OCI-LY7 (cell line): ENCODE measurements at regions of chr12 and their contacts with region 1.

Region 1: GRCh38 chr12:95003213-95003920 is at the start of gene NDUFA12:
- DNase-seq: peak; percentile 97
- H3K4me3 ChIP-seq: peak within 1 kb of the TSS; percentile 80
- H3K27ac ChIP-seq: peak within 1 kb of the TSS; percentile 56
- H3K4me1 ChIP-seq: peaks cover 32% of the 10 kb centered on the region
- CTCF ChIP-seq: no peak
- total RNA-seq, gene NDUFA12: 109 and 127 TPM in 2 replicates

Region 2: GRCh38 chr12:94839347-94839746 is 164.0 kb before region 1 on chr12:
- CTCF ChIA-PET with region 1: no interaction called
- POLR2A ChIA-PET with region 1: no interaction called
- intact Hi-C with region 1: no loop called
- DNase-seq: peak; percentile 66
- H3K4me3 ChIP-seq: no peak overlapping the region
- H3K27ac ChIP-seq: peak overlapping the region; percentile 50
- H3K4me1 ChIP-seq: peaks cover 19% of the 10 kb centered on the region
- CTCF ChIP-seq: no peak

Region 3: DNA sequence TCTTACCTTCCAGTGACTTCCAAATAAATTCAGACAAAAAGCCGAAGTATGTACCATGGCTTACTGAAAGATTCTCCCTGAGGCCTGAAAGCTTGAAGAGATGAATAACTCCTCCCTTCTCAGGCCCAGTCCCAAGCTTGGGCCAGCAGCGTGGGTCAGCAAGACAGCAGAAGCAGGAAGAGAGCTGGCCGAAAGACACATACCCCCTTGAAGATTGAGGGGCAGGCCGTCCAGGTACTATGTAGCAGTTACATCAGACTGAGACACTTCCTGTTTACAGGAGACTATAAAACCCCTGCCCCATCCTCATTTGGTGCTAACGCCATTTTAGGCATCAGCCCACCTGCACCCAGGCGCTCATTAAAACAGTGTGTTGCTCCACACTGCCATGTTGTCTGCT is 14.9 kb before region 1 on chr12:
- CTCF ChIA-PET with region 1: no interaction called
- POLR2A ChIA-PET with region 1: interaction called, 27 read pairs
- intact Hi-C with region 1: no loop called
- DNase-seq: peak; percentile 16
- H3K4me3 ChIP-seq: no peak overlapping the region
- H3K27ac ChIP-seq: peak overlapping the region; percentile 20
- H3K4me1 ChIP-seq: peaks cover 26% of the 10 kb centered on the region
- CTCF ChIP-seq: no peak

Region 4: GRCh38 chr12:95072900-95073697 is 69.7 kb after region 1 on chr12 and contains the start of gene NR2C1:
- CTCF ChIA-PET with region 1: no interaction called
- POLR2A ChIA-PET with region 1: interaction called, 12 read pairs
- intact Hi-C with region 1: no loop called
- DNase-seq: peak; percentile 97
- H3K4me3 ChIP-seq: peak within 1 kb of the TSS; percentile 93
- H3K27ac ChIP-seq: peak within 1 kb of the TSS; percentile 53
- H3K4me1 ChIP-seq: peaks cover 13% of the 10 kb centered on the region
- CTCF ChIP-seq: no peak
- total RNA-seq, gene NR2C1: 37.5 and 43.4 TPM in 2 replicates

Region 5: DNA sequence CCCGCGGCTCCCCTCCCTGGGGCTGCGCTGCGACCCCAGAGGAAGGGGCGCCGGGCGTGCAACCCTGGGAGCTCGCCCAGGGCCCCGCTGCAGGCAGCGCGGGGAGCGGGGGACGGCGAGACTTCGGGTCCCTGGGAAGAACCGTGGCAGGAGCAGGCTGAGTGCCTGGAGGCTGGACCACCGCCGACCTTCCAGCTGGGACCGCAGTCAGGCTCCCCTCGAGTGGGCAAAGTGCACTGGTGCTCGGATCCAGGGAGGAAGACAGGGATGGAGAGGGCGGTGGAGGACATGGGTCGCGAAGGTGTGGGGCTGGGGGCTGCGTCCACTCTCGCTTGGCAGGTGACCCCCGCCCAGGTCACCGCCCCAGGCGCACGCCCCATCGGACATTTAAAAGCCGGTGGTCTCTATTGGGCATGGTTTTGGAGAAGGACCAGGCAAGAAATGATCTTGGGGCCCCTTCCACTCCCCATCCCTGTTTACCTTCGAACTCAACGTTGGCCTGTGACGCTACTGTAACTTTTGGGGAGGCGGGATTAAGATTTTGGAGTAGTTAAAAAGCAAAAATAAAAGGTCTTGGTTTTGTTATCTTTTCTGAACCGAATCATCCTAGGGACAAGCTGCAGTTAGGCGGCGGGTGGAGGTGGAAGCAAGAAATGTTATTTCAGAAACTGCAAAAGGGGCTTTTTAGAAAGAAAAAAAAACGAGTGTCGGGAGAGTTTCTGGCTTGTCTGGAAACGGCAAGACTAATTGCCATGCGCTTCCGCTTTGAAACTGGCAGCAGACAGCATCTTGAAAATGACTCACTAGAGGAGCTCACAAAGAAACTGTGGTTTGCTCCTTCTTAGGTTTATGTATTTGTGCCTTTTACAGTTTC is 1191.8 kb after region 1 on chr12:
- CTCF ChIA-PET with region 1: no interaction called
- POLR2A ChIA-PET with region 1: no interaction called
- intact Hi-C with region 1: loop called (anchors 5 kb)
- DNase-seq: peak; percentile 84
- H3K4me3 ChIP-seq: peak overlapping the region; percentile 70
- H3K27ac ChIP-seq: peak overlapping the region; percentile 46
- H3K4me1 ChIP-seq: peaks cover 70% of the 10 kb centered on the region
- CTCF ChIP-seq: no peak